CD8-positive, alpha-beta T cell (primary cell): ENCODE measurements at regions of chr1 and their contacts with region 1.

Region 1: DNA sequence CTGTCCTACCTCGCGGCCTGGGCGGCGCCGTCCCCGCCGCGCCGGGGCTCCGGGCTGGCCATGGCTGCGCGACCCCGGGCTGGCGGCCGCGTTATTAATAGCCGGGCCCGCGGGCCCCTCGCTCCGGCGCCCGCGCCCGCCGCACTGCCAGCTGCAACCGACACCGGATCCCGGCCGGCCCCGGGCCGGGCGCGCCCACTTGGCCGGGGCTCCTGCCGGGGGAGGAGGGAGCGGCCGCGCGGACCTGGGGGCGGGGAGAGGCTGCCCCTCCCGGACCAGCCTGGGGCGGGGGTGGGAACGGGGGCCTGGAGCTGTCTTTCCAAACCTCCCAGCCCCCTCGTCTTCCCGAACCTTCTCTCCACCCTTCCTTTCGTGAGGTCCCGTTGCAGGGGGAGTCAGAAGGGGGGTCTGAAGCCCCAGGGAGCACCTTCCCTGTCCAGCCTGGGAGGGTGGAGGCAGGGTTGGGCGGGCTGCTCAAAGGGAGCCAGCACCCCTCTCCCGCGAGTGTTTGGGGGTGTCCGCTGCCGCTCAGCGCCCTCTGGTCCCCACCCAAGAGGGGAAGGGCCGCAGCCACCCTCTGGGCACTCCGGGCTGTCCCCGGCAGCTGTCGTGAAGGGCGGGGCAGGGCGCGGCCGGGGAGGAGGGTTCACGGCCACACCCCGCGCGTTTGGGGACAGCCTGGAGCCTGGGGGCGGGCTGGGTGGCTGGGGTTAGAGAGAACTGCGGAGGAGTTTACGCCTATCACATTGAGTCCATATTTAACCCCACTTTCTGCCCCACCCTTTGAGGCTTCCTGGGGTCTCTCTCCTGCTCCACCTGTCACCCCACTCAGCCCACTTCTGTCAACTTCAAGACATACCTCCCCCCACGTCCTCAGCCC is at the start of gene SYNC:
- DNase-seq: peak in 2 of 9 experiments; percentile 17 to 22
- ATAC-seq: peak; percentile 57
- H3K4me3 ChIP-seq: peak within 1 kb of the TSS in 1 of 2 experiments; percentile 28
- H3K4me3 Mint-ChIP-seq: peak within 1 kb of the TSS; percentile 67
- H3K27ac ChIP-seq: no peak within 1 kb of the TSS
- H3K27ac Mint-ChIP-seq: no peak within 1 kb of the TSS
- H3K4me1 ChIP-seq: peaks cover 10% of the 10 kb centered on the region
- H3K4me1 Mint-ChIP-seq: peaks cover 12% of the 10 kb centered on the region
- H3K27me3 ChIP-seq: peaks cover 19 to 21% of the 10 kb centered on the region in 2 experiments
- H3K27me3 Mint-ChIP-seq: peaks cover 37% of the 10 kb centered on the region
- CTCF ChIP-seq: no peak
- total RNA-seq, gene SYNC: not detected

Region 2: GRCh38 chr1:32684167-32684811 is 18.6 kb before region 1 on chr1:
- CTCF ChIA-PET with region 1: no interaction called
- POLR2A ChIA-PET with region 1: no interaction called
- intact Hi-C with region 1: loop called in 1 of 2 experiments (anchors 1 kb)
- DNase-seq: no peak
- ATAC-seq: no peak
- H3K4me3 ChIP-seq: no peak overlapping the region
- H3K4me3 Mint-ChIP-seq: no peak overlapping the region
- H3K27ac ChIP-seq: no peak overlapping the region
- H3K27ac Mint-ChIP-seq: peak overlapping the region; percentile 11
- H3K4me1 ChIP-seq: no peaks in the 10 kb centered on the region
- H3K4me1 Mint-ChIP-seq: no peaks in the 10 kb centered on the region
- H3K27me3 ChIP-seq: no peaks in the 10 kb centered on the region
- H3K27me3 Mint-ChIP-seq: no peaks in the 10 kb centered on the region
- CTCF ChIP-seq: no peak

Region 3: DNA sequence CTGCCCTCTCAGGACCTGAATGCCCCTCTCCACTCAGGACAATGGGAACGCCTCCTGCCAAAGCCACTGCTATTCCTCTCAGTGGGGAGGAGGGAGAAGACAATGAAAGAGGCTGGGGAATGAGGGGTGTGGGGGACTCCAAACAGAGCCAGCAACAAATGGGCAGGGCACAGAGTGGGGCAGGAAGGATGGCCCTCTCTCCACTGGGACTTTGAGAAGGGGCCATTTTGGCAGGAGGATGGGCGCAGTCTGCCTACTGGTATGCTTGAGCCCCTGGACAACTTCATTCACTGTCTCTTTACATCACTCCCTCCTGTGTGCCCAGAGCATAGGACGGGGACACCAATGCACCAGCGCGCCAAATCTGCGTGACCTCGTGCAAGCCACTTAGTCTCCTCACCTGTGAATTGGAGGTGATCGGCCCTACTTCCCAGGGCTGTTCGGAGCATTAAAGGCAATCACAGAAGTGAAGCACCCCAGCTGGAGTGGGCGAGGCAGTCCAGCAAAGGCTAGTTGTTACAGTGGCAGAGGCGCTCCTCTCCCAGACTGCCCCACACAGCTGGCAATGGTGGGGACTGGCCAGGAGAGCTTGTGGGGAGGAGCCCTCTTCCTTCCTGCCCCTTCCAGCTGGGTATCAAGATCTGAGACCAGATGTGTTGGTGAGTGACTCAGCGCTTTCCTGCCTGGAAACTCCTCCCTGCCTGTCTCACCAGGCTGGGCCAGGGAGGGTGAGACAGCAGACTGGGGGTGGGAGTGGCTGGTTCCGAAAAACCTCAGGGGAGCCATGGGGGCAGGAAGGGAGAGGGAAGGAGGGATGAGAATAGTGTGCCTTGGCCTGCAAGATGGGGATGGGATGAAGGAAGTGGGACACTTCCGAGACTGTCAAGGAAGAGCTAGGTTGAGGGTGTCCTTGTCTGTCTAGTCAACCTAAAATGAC is 22.1 kb after region 1 on chr1:
- CTCF ChIA-PET with region 1: no interaction called
- POLR2A ChIA-PET with region 1: no interaction called
- intact Hi-C with region 1: no loop called
- DNase-seq: no peak
- ATAC-seq: peak; percentile 36
- H3K4me3 ChIP-seq: no peak overlapping the region
- H3K4me3 Mint-ChIP-seq: no peak overlapping the region
- H3K27ac ChIP-seq: no peak overlapping the region
- H3K27ac Mint-ChIP-seq: no peak overlapping the region
- H3K4me1 ChIP-seq: no peaks in the 10 kb centered on the region
- H3K4me1 Mint-ChIP-seq: peaks cover 7% of the 10 kb centered on the region
- H3K27me3 ChIP-seq: no peaks in the 10 kb centered on the region
- H3K27me3 Mint-ChIP-seq: peaks cover 22% of the 10 kb centered on the region
- CTCF ChIP-seq: no peak